ENCODE measurements at regions of chr19 and their contacts with region 1.

Region 1: DNA sequence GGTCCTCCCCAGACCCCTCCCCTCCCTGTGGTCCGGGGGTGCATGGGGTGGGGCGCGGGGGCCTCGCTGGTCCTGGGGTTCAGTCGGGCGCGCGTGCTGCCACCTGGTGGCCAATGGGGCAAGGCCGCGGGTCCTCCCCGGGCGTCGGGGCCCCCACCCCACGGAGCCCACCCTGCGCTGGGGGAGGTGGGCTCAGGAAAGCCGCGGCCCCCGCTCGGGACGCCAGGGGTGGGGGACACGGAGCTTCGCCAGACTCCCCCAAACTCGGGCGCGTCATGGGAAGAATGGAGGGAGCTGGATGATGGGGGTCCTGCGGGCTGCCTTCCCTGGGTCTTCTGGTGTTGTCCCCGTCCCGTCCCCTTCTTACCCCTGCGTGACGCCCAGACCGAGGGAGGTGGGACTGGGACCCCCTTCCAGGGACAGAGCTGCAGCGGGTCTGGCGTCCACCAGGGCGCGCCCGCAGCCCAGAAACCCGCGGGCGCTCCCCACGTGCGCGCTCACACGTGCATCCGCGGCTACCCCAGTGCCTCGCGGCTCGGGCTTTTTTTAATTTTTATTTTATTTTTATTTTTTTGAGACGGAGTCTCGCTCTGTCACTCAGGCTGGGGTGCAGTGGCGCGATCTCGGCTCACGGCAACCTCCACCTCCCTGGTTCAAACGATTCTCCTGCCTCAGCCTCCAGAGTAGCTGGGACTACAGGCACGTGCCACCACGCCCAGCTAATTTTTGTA is 19.8 kb upstream of the TCF3 start:
- DNase-seq: peak in 1 of 2 donors; percentile 50
- ATAC-seq: peak in 7 of 8 donors; percentile 51 to 72 (median 66)
- H3K4me3 ChIP-seq: peak overlapping the region in 4 of 10 donors; percentile 8 to 24 (median 14)
- H3K27ac ChIP-seq: no peak overlapping the region
- H3K4me1 ChIP-seq: peaks cover 2 to 26% (median 17%) of the 10 kb centered on the region in 9 donors
- H3K27me3 ChIP-seq: peaks cover 41 to 93% (median 91%) of the 10 kb centered on the region in 7 donors
- CTCF ChIP-seq: peak; percentile 61 to 90 (median 80)

Region 2: DNA sequence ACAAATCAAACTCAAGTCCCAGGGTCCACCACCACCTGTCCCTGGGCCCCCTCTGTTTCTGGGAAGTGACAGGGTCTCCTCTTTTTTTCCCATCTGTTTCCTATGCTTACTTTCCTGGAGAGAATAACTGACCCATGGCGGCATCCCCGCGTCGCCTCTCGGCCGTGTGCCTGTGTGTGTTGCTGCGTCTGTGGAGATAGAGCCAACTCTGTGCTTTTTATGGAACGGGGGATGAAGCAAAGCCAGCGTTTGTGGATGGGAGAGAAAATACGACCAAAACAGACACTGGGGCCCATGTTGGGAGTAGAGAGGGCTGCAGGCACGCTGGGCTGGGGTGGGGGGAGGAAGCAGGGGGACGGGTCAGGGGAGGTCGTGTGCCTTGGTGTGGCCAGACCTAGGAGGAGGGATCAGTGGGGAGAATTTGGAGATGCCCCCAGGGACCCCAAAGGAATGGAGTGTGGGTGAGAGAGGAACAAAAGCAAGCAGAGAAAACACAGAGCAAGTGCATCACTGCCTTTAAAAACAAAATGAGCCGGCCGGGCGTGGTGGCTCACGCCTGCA is 131.8 kb before region 1 on chr19:
- intact Hi-C with region 1: loop called in 6 of 10 experiments (anchors 5 to 10 kb)
- DNase-seq: no peak
- ATAC-seq: peak in 7 of 8 donors; percentile 43 to 79 (median 67)
- H3K4me3 ChIP-seq: no peak overlapping the region
- H3K27ac ChIP-seq: peak overlapping the region in 2 of 10 donors; percentile 44 to 58
- H3K4me1 ChIP-seq: peaks cover 0 to 22% (median 4%) of the 10 kb centered on the region in 9 donors
- H3K27me3 ChIP-seq: peaks cover 0 to 23% (median under 1%) of the 10 kb centered on the region in 7 donors
- CTCF ChIP-seq: no peak

Region 3: DNA sequence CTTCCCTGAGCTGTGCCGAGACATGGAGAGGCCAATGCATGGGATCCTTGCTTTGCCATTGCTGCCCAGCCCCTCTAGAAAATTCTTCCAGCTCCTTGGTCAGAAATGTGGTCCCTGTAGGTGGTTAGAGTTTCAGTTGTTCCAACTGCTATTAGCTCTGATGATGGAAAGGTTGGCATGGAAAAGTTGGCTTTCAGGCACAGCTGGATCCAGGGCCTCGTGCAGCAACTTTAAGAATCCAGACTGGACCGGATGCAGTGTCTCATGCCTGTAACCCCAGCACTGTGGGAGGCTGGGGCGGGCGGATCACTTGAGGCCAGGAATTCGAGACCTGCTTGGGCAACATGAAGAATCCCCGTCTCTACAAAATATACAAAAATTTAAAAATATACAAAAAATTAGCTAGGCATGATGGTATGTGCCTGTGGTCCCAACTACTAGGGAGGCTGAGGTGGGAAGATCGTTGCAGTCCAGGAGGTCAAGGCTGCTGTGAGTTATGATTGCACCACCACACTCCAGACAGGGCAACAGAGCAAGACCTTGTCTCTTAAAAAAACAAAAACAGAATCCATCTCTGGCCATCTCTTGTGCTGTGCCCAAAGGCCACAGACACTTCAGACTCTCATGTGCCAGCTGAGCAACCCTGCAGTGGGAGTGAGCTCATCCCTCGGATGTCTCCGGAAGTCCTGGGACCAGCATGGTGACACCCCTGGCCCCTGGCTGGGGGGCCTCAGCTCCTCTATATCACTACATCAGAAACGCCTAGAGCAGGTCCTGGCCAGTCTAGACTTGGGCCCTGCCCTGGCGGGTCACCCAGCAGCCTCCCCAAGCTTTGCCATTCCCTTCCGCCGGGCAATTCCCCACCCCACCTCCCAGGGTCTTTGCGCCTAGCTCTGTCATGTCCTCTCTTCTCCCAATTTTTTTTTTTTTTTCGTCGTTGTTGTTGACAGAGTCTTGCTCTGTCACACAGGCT is 120.8 kb before region 1 on chr19:
- intact Hi-C with region 1: loop called in 9 of 10 experiments (anchors 2 to 10 kb)
- DNase-seq: no peak
- ATAC-seq: no peak
- H3K4me3 ChIP-seq: no peak overlapping the region
- H3K27ac ChIP-seq: no peak overlapping the region
- H3K4me1 ChIP-seq: peaks cover 0 to 1% (median under 1%) of the 10 kb centered on the region in 9 donors
- H3K27me3 ChIP-seq: peaks cover 0 to 7% (median under 1%) of the 10 kb centered on the region in 7 donors
- CTCF ChIP-seq: no peak

Region 4: GRCh38 chr19:1605236-1606137 is 66.7 kb before region 1 on chr19 and contains the start of gene UQCR11:
- intact Hi-C with region 1: loop called in 2 of 10 experiments (anchors 5 kb)
- DNase-seq: peak; percentile 94 to 96
- ATAC-seq: peak; percentile 94 to 98 (median 97)
- H3K4me3 ChIP-seq: peak within 1 kb of the TSS; percentile 92 to 100 (median 96)
- H3K27ac ChIP-seq: peak within 1 kb of the TSS; percentile 88 to 100 (median 97)
- H3K4me1 ChIP-seq: peaks cover 12 to 49% (median 35%) of the 10 kb centered on the region in 9 donors
- H3K27me3 ChIP-seq: no peaks in the 10 kb centered on the region
- CTCF ChIP-seq: peak; percentile 20 to 76 (median 59)
- total RNA-seq, gene UQCR11: 569 to 1,132 (median 804) TPM

Region 5: GRCh38 chr19:1690699-1691307 is 18.6 kb after region 1 on chr19:
- intact Hi-C with region 1: no loop called
- DNase-seq: no peak
- ATAC-seq: peak in 2 of 8 donors; percentile 31 to 48
- H3K4me3 ChIP-seq: no peak overlapping the region
- H3K27ac ChIP-seq: no peak overlapping the region
- H3K4me1 ChIP-seq: peaks cover 0 to 4% (median 0%) of the 10 kb centered on the region in 9 donors
- H3K27me3 ChIP-seq: peaks cover 11 to 83% (median 73%) of the 10 kb centered on the region in 7 donors
- CTCF ChIP-seq: no peak

Region 6: DNA sequence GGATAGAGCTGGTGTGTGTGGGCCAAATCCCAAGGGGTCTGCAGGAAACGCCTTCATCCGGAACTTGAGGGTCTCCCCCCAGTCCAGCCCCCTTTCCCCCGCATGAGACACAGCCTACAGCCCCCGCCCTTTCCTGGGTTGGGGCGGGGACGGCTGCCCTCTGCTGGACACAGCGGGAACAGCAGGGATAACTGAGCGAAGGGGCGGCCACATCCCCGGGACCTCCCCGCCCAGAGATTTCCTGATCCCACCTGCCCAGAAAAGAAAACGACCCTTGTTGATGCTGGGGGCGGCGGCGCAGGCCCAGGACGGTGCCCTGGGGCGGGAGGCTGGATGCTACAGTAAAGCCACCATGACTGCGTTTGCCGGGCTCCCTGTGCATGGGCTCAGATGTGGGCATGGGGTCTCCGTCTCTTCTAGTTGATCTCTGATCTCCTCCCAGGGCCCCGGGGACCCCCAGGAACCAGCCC is 95.3 kb after region 1 on chr19:
- intact Hi-C with region 1: loop called in 2 of 10 experiments (anchors 10 kb)
- DNase-seq: peak; percentile 21 to 48
- ATAC-seq: peak in 7 of 8 donors; percentile 65 to 83 (median 73)
- H3K4me3 ChIP-seq: no peak overlapping the region
- H3K27ac ChIP-seq: no peak overlapping the region
- H3K4me1 ChIP-seq: peaks cover 0 to 6% (median 0%) of the 10 kb centered on the region in 9 donors
- H3K27me3 ChIP-seq: peaks cover 22 to 100% (median 98%) of the 10 kb centered on the region in 7 donors
- CTCF ChIP-seq: peak; percentile 81 to 97 (median 94)

Region 7: GRCh38 chr19:1789261-1790041 is 117.2 kb after region 1 on chr19:
- intact Hi-C with region 1: loop called in 1 of 10 experiments (anchors 10 kb)
- DNase-seq: no peak
- ATAC-seq: peak in 6 of 8 donors; percentile 24 to 42 (median 31)
- H3K4me3 ChIP-seq: peak overlapping the region in 8 of 10 donors; percentile 7 to 44 (median 32)
- H3K27ac ChIP-seq: peak overlapping the region in 1 of 10 donors; percentile 44
- H3K4me1 ChIP-seq: peaks cover 0 to 9% (median 5%) of the 10 kb centered on the region in 9 donors
- H3K27me3 ChIP-seq: peaks cover 0 to 48% (median 41%) of the 10 kb centered on the region in 7 donors
- CTCF ChIP-seq: no peak

Region 8: GRCh38 chr19:1812469-1813196 is 140.4 kb after region 1 on chr19:
- intact Hi-C with region 1: loop called in 1 of 10 experiments (anchors 10 kb)
- DNase-seq: peak; percentile 91 to 93
- ATAC-seq: peak; percentile 83 to 93 (median 91)
- H3K4me3 ChIP-seq: peak overlapping the region; percentile 4 to 66 (median 58)
- H3K27ac ChIP-seq: peak overlapping the region in 9 of 10 donors; percentile 35 to 82 (median 58)
- H3K4me1 ChIP-seq: peaks cover 5 to 24% (median 17%) of the 10 kb centered on the region in 9 donors
- H3K27me3 ChIP-seq: no peaks in the 10 kb centered on the region
- CTCF ChIP-seq: peak in 7 of 9 donors; percentile 31 to 60 (median 58)

Region 9: GRCh38 chr19:1848399-1849131 is 176.4 kb after region 1 on chr19 and contains the start of gene REXO1:
- intact Hi-C with region 1: no loop called
- DNase-seq: peak; percentile 96
- ATAC-seq: peak; percentile 80 to 90 (median 86)
- H3K4me3 ChIP-seq: peak within 1 kb of the TSS; percentile 93 to 100 (median 98)
- H3K27ac ChIP-seq: peak within 1 kb of the TSS; percentile 98 to 100 (median 99)
- H3K4me1 ChIP-seq: peaks cover 16 to 68% (median 48%) of the 10 kb centered on the region in 9 donors
- H3K27me3 ChIP-seq: no peaks in the 10 kb centered on the region
- CTCF ChIP-seq: peak; percentile 82 to 98 (median 94)
- total RNA-seq, gene REXO1: 13.1 to 20.1 (median 16.5) TPM